MCF 10A (cell line): ENCODE measurements at regions of chr15 and their contacts with region 1.

Region 1: DNA sequence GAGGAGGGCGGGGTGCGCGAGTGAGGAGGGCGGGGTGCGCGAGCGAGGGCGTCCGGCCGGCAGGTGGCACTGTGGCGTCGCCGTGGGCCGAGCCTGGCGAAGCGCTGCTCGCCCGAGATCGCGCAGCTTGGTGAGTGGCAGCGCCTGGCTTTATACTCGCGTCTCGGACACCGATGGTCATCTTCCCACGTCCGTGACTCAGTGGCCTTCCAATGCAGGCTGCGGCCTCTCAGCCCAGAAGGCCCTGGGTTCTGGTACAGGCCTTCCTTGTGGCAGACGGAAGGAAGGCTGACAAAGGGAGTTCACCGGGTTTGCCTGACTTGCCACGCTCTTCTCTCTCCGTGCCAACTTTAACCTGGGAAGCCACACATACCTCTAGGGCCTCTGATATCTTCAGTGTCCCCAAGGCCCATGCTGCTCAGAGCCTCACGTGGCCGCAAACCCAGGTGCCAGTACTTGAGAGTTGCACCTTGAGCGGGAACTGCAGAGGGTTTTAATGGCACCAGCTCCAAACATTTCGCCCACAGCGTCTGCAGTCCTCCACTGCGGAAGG is 195.3 kb upstream of the LYSMD4 start:
- DNase-seq: peak; percentile 70
- H3K4me3 Mint-ChIP-seq: peak overlapping the region; percentile 70
- H3K27ac Mint-ChIP-seq: no peak overlapping the region
- H3K4me1 Mint-ChIP-seq: peaks cover 24% of the 10 kb centered on the region
- H3K27me3 Mint-ChIP-seq: peaks cover 7% of the 10 kb centered on the region
- CTCF ChIP-seq: peak; percentile 71

Region 2: DNA sequence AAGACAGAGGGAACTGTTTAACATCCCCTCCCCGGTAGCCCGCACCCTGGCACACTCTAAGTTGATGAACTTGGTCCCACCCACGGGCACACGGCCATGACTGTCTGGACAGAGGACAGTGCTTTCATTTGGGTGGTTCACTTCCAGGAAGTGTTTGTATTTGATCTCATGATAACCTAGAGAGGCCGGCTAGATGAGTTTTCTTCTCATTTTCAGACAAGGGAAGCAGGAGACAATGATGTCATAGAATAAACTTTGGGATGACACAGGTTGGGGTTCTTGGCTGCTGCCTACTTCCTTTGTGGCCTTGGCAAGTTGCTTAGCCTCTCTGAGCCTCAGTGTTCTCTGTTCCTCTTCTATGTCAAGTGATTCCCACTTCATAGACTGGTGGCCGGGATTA is 179.1 kb before region 1 on chr15:
- CTCF ChIA-PET with region 1: no interaction called
- POLR2A ChIA-PET with region 1: no interaction called
- intact Hi-C with region 1: no loop called
- DNase-seq: no peak
- H3K4me3 Mint-ChIP-seq: no peak overlapping the region
- H3K27ac Mint-ChIP-seq: no peak overlapping the region
- H3K4me1 Mint-ChIP-seq: peaks cover 5% of the 10 kb centered on the region
- H3K27me3 Mint-ChIP-seq: no peaks in the 10 kb centered on the region
- CTCF ChIP-seq: no peak

Region 3: DNA sequence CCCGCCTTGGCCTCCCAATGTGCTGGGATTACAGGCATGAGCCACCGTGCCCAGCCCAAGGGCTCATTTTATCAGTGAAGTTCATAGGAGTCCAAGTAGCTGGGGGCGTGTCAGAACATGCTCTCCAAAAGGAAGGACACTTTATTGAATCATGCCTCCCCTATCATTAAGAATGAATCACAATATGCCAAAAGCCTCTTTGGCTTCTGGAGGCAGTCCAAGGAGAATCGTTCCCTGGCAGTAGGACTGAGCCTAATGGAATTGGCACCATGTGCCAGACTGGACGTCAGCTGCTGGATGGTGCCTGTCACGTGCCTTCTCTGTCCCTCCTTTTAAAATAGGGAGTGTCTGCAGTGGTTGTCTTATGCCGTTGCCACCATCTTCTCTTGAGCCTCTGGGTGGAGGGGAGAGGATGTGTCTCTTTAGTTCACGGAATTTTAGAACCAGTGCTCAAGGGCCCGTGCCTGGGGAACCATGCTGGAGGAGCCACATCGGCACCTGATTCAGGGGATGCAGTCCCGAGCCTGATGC is 39.4 kb after region 1 on chr15:
- CTCF ChIA-PET with region 1: no interaction called
- POLR2A ChIA-PET with region 1: no interaction called
- intact Hi-C with region 1: loop called (anchors 5 kb)
- DNase-seq: peak; percentile 96
- H3K4me3 Mint-ChIP-seq: peak overlapping the region; percentile 3
- H3K27ac Mint-ChIP-seq: peak overlapping the region; percentile 41
- H3K4me1 Mint-ChIP-seq: peaks cover 22% of the 10 kb centered on the region
- H3K27me3 Mint-ChIP-seq: no peaks in the 10 kb centered on the region
- CTCF ChIP-seq: no peak

Region 4: DNA sequence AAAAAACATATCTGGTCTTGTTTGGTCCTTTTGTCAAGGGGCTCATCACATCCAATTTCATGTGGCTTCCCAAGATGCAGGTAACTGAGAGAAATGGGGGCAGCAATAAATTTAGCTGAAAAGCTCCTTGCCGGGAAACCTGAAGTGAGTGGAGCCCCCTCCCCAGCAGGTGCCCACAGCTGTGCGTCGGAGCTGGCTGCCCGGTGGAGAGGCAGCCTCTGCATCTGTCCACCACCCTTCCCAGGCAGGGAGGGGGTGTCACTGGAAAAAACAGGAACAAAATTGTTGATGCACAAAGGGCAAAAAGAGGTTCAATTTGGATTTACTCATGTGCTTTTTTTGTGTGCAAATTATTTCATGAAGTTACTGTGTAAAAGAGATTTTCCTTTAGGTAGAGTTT is 54.2 kb after region 1 on chr15:
- CTCF ChIA-PET with region 1: no interaction called
- POLR2A ChIA-PET with region 1: no interaction called
- intact Hi-C with region 1: no loop called
- DNase-seq: no peak
- H3K4me3 Mint-ChIP-seq: no peak overlapping the region
- H3K27ac Mint-ChIP-seq: no peak overlapping the region
- H3K4me1 Mint-ChIP-seq: peaks cover 15% of the 10 kb centered on the region
- H3K27me3 Mint-ChIP-seq: no peaks in the 10 kb centered on the region
- CTCF ChIP-seq: no peak

Region 5: GRCh38 chr15:100159436-100159835 is 230.9 kb after region 1 on chr15:
- CTCF ChIA-PET with region 1: no interaction called
- POLR2A ChIA-PET with region 1: no interaction called
- intact Hi-C with region 1: loop called (anchors 2 kb)
- DNase-seq: peak; percentile 5
- H3K4me3 Mint-ChIP-seq: no peak overlapping the region
- H3K27ac Mint-ChIP-seq: no peak overlapping the region
- H3K4me1 Mint-ChIP-seq: no peaks in the 10 kb centered on the region
- H3K27me3 Mint-ChIP-seq: no peaks in the 10 kb centered on the region
- CTCF ChIP-seq: peak; percentile 13

Region 6: DNA sequence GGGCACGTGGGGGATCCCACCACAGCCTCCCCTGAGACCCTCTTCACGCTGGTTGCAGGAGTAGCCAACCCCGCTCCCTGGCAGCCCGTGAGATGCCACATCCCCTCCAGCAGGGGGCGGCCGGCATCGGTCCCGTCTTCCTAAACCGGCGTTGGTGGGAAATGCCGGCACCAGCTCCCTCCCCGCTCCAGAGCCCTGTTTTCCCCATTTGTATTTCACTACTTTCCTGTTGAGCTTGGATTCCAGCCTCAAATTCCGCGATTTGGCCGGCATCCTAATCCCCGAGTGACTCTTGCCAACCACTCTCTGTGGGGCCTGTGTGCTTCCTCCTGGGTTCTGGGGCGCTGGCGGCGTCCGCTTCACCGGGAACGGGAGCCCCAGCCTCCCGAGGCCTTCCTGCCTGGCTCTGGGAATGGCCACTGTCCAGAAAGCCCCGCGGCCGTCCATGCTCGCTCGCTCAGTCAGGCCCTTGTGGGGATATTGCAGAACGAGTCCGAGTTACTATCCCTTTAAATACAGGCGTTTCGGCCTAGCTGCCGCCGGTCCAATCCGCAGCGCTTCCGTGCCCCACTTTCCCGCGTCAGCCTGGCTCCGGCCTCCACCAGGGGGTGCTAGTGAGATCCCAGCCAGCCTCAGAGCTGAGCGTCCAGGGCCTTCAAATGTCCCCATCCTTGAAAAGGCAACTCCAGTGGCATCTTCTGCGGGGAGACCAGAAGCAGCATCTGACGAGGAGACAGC is 421.4 kb after region 1 on chr15:
- CTCF ChIA-PET with region 1: interaction called, 11 read pairs
- POLR2A ChIA-PET with region 1: interaction called, 10 read pairs
- intact Hi-C with region 1: no loop called
- DNase-seq: peak; percentile 93
- H3K4me3 Mint-ChIP-seq: peak overlapping the region; percentile 86
- H3K27ac Mint-ChIP-seq: peak overlapping the region; percentile 94
- H3K4me1 Mint-ChIP-seq: peaks cover 12% of the 10 kb centered on the region
- H3K27me3 Mint-ChIP-seq: no peaks in the 10 kb centered on the region
- CTCF ChIP-seq: peak; percentile 78

Region 7: DNA sequence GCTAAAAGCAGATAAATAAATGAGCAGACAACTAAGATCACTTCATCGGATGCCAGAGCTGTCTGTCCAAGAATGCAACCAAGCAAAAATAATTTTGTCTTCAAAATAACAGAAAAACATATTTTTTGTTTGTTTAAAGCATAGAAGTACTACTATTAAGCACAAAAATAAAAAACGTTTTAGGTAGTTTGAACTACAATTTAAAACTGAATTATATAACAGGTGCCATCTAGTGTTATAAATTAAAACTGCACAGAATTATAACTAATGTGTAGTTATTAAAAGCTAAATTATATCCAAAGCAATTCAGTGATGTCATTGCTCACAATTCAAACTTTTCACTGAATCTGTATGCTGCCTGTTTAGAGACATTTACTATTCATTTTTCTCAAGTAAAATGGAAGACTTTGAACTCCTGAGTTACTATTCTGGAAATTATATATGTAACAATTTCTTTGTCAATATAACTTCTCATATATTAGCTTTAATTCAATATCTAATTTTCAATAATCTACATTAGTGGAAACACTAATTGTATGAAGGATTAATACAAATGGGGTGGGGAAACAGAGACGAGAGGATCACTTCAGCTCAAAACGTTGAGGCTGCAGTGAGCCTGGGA is 644.0 kb after region 1 on chr15:
- CTCF ChIA-PET with region 1: interaction called, 3 read pairs
- POLR2A ChIA-PET with region 1: no interaction called
- intact Hi-C with region 1: loop called (anchors 10 kb)
- DNase-seq: peak; percentile 11
- H3K4me3 Mint-ChIP-seq: no peak overlapping the region
- H3K27ac Mint-ChIP-seq: no peak overlapping the region
- H3K4me1 Mint-ChIP-seq: no peaks in the 10 kb centered on the region
- H3K27me3 Mint-ChIP-seq: no peaks in the 10 kb centered on the region
- CTCF ChIP-seq: peak; percentile 41